ENCODE measurements at regions of chr1 and their contacts with region 1.

Region 1: DNA sequence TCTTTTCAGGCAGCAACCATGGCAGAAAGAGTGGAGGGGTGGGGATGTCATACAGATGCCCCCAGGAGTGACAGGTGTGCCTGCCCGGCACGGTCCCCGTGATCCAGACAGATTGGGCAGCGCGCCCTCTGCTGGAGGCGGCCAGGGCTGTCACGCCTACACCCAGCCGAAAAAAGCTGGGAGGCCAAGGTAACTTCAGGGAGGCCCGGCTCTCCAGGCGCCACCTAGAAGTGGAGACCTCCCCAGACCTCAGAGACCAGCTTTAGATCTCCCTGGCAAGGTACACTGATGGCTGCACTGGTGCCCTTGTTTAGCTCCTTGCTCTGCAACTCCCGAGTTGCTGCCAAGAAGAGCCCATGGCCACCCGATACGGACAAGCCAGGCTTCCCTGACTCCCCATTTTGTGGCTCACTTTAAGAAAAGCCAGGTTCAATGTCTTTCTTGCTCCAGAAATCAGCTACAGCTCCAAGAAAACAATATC is 6.6 kb downstream of the GOLT1A start:
- DNase-seq: peak; percentile 86
- ATAC-seq: peak; percentile 98
- H3K4me3 Mint-ChIP-seq: no peak overlapping the region
- H3K27ac Mint-ChIP-seq: no peak overlapping the region
- H3K4me1 Mint-ChIP-seq: peaks cover 5% of the 10 kb centered on the region
- H3K27me3 Mint-ChIP-seq: peaks cover 22% of the 10 kb centered on the region
- CTCF ChIP-seq: peak; percentile 96

Region 2: DNA sequence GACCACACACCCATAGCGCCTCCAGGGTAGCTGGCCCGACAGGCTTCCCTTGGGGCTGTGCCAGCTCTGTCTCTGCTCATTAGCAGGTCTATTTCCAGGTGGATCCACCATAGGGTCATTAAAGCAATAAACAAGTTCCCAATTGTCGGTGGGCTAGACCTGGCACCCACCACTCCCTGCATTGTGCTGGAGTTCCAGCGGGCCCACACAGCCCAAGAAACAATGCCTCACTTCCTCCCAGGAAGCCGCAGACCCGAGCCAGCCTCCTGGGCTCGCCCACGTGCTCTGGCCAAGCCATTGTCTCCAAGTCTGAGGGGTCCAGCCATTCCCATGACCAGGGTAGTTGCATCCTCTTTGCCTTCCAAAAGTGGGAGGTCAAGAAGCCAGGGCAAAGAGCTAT is 161.7 kb before region 1 on chr1:
- CTCF ChIA-PET with region 1: no interaction called
- POLR2A ChIA-PET with region 1: no interaction called
- intact Hi-C with region 1: no loop called
- DNase-seq: no peak
- ATAC-seq: no peak
- H3K4me3 Mint-ChIP-seq: no peak overlapping the region
- H3K27ac Mint-ChIP-seq: no peak overlapping the region
- H3K4me1 Mint-ChIP-seq: no peaks in the 10 kb centered on the region
- H3K27me3 Mint-ChIP-seq: no peaks in the 10 kb centered on the region
- CTCF ChIP-seq: no peak

Region 3: GRCh38 chr1:204162231-204163074 is 44.7 kb before region 1 on chr1:
- CTCF ChIA-PET with region 1: interaction called, 60 read pairs
- POLR2A ChIA-PET with region 1: no interaction called
- intact Hi-C with region 1: loop called (anchors 2 kb)
- DNase-seq: peak; percentile 86
- ATAC-seq: peak; percentile 98
- H3K4me3 Mint-ChIP-seq: no peak overlapping the region
- H3K27ac Mint-ChIP-seq: no peak overlapping the region
- H3K4me1 Mint-ChIP-seq: peaks cover 2% of the 10 kb centered on the region
- H3K27me3 Mint-ChIP-seq: peaks cover 7% of the 10 kb centered on the region
- CTCF ChIP-seq: peak; percentile 96

Region 4: DNA sequence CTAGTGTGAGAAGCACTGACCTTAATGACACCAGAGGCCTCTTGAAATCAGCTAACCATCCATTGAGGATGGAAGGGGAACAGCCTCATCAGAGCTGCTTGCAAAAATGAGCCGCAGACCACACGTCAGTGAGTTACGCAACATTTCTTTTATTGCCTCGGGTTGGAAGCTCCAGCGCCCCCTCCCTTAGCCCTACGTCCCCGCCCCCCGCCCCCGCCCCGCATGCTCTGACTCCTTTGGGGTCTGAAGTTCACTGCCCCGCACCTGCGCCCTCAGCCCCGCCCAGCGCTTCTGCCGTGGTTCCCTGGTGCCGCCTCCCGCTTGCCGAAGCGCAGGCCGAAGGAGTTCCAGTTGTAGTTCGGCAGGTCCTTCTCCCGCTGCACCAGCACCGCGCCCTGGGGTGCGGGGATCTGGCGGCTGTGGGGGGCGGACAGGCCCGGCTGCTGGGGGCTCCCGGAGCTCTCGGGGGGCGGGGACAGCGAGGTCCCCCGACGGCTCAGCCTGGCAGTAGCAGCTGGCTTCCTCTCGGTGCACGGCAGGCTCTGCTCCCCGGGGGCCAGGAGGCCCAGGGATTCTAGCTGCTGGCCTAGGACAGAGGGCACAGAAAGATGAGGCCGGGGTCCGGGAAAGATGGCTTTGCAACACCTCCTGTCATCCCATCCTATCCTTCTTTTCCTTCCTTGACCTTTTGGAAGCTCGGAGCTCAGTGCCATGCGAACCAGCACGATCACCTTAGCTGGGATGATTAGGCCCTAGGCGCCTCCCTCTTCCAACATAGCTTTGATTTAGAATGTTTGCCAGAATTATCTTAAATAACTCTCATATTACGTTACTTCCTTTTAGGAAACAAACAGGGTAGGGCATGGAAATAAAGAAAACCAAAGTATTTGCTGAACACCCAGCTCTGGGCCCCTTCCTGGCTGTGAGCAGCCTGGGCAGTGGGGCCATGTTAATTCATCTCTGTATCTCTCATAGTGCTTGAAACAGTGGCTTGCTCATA is 16.7 kb before region 1 on chr1:
- CTCF ChIA-PET with region 1: interaction called, 44 read pairs
- POLR2A ChIA-PET with region 1: no interaction called
- intact Hi-C with region 1: no loop called
- DNase-seq: peak; percentile 63
- ATAC-seq: peak; percentile 72
- H3K4me3 Mint-ChIP-seq: no peak overlapping the region
- H3K27ac Mint-ChIP-seq: no peak overlapping the region
- H3K4me1 Mint-ChIP-seq: peaks cover 29% of the 10 kb centered on the region
- H3K27me3 Mint-ChIP-seq: peaks cover 31% of the 10 kb centered on the region
- CTCF ChIP-seq: no peak

Region 5: GRCh38 chr1:204232526-204232925 is 25.4 kb after region 1 on chr1:
- CTCF ChIA-PET with region 1: interaction called, 14 read pairs
- POLR2A ChIA-PET with region 1: no interaction called
- intact Hi-C with region 1: no loop called
- DNase-seq: no peak
- ATAC-seq: no peak
- H3K4me3 Mint-ChIP-seq: no peak overlapping the region
- H3K27ac Mint-ChIP-seq: no peak overlapping the region
- H3K4me1 Mint-ChIP-seq: no peaks in the 10 kb centered on the region
- H3K27me3 Mint-ChIP-seq: peaks cover 1% of the 10 kb centered on the region
- CTCF ChIP-seq: no peak

Region 6: DNA sequence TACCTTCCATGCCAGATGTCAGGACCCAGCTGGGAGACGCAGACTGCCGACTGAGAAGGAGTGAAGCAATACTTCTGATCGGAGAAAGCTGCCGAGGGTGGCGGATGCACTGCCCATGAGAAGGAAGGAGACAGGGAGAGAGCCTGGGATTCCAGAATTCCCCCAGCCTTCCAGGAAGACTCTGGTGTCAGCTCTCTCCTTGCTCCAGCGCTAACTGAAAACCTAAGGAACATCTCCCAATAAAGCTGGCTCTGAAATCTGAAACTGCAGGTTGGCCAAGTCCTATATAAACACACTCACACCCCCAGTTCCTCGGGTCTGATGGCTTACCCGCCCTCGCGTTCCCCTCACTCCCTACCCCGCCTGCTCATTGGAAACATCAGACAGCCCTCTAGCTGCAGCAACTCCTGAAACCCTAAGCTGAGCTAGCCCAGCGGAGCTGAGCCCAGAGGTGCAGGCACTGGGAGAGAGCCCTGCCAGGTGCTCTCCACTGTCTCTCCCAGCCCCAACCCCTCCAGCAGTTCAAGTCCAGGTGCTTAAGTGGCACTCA is 100.2 kb after region 1 on chr1:
- CTCF ChIA-PET with region 1: no interaction called
- POLR2A ChIA-PET with region 1: no interaction called
- intact Hi-C with region 1: no loop called
- DNase-seq: no peak
- ATAC-seq: no peak
- H3K4me3 Mint-ChIP-seq: no peak overlapping the region
- H3K27ac Mint-ChIP-seq: no peak overlapping the region
- H3K4me1 Mint-ChIP-seq: no peaks in the 10 kb centered on the region
- H3K27me3 Mint-ChIP-seq: peaks cover 9% of the 10 kb centered on the region
- CTCF ChIP-seq: no peak

Region 7: DNA sequence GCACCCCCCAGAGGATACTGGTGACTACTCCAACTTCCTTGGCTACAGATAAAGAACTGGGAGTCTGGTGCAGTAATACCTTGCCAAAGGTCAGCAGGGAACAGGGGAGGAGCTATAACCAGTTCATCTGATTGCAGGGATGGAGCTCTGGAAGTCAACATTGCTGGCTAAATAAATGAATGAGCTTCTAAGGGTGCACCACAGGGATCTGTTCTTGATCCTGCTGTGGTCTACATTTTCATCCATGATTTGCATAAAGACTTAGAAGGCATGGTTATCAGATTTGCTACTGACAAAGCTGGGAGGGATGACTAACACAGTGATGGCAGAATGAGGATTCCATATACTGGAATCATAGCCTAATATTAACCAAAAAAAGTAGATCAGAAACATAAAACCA is 134.2 kb after region 1 on chr1:
- CTCF ChIA-PET with region 1: interaction called, 14 read pairs
- POLR2A ChIA-PET with region 1: no interaction called
- intact Hi-C with region 1: no loop called
- DNase-seq: no peak
- ATAC-seq: no peak
- H3K4me3 Mint-ChIP-seq: no peak overlapping the region
- H3K27ac Mint-ChIP-seq: no peak overlapping the region
- H3K4me1 Mint-ChIP-seq: peaks cover 7% of the 10 kb centered on the region
- H3K27me3 Mint-ChIP-seq: peaks cover 4% of the 10 kb centered on the region
- CTCF ChIP-seq: no peak

Region 8: DNA sequence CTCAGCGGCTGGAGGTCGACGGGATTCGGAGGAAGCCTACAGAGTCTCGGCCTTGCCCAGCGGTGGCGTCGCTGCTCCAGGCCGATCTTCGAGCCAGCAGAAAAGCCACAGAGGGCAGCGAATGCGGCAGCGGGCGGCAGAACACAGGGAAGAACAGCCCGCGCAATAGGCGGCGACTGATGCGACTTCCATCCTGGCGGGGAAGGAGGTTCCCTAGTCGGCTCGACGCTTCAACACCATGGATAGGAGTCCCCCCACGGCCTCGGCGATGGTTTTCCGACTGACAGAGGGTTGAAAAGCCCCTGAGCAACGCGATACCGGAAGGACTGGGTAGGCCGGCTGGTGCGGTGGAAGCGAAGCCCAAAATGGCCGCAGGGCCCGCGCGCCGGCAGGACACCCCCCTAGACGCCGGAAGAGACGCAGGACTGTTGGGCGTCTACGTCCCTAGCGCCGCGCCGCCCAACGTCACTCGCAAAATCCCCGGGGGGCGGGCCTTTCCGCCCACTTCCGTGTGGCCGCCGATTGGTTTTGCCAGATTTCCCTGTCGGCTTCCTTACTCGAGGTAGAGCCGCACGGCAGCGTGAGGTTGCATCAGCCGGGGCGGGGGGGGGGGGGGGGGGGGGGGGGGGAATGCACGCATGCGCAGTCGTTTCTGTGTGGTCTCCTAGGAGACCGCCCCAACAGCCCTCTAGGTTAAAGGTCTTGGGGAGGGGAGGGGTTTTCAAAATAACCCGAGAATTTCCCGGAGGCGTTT is 204.5 kb after region 1 on chr1 and contains the start of gene PPP1R15B:
- CTCF ChIA-PET with region 1: no interaction called
- POLR2A ChIA-PET with region 1: no interaction called
- intact Hi-C with region 1: no loop called
- DNase-seq: peak; percentile 97
- ATAC-seq: peak; percentile 92
- H3K4me3 Mint-ChIP-seq: peak within 1 kb of the TSS; percentile 99
- H3K27ac Mint-ChIP-seq: peak within 1 kb of the TSS; percentile 100
- H3K4me1 Mint-ChIP-seq: peaks cover 19% of the 10 kb centered on the region
- H3K27me3 Mint-ChIP-seq: no peaks in the 10 kb centered on the region
- CTCF ChIP-seq: no peak
- total RNA-seq, gene PPP1R15B: 63.8 to 64.6 TPM

Measured in activated CD8-positive, alpha-beta T cell treated with anti-CD3 and anti-CD28 coated beads for 36 hours (primary cell).